B cell (primary cell): ENCODE measurements at regions of chr9 and their contacts with region 1.

Region 1: DNA sequence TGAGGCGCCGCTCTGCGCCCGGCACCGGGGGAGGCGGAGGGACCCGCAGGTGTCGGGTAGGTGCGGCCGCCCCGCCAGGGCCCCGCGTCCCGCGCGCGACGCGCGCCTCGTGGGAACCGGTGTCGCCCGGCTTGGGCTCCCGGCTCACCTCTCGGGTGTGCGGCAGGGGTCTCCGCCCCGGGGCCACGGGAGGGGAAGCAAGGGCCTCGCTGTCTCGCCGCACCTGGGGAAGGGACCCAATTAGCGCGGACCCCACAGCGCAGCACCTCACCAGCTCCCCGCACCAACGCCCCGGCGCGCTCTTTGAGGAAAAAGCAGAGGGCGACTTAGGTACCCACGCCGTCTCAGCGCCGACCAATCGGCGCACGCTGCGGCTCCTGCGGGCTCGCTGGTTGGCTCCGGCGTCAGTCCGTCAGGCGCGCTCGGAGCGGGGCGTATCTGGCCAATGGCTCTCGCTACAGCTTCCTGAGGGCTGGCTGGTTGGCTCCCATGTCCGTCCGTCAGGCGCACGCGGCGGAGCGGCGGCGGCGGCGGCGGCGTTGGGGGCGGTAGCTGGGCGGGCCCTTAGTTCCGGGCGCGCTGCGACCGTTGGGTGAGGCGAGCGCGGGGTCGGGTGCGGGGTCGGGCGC is at the start of gene TRAF2:
- DNase-seq: peak; percentile 99
- ATAC-seq: peak; percentile 91
- H3K4me3 ChIP-seq: peak within 1 kb of the TSS; percentile 30 to 91 (median 83)
- H3K4me3 Mint-ChIP-seq: peak within 1 kb of the TSS; percentile 91
- H3K27ac ChIP-seq: peak within 1 kb of the TSS; percentile 78 to 99
- H3K27ac Mint-ChIP-seq: peak within 1 kb of the TSS; percentile 87
- H3K4me1 ChIP-seq: peaks cover 28 to 36% of the 10 kb centered on the region in 2 donors
- H3K4me1 Mint-ChIP-seq: peaks cover 34% of the 10 kb centered on the region
- H3K27me3 ChIP-seq: no peaks in the 10 kb centered on the region
- H3K27me3 Mint-ChIP-seq: no peaks in the 10 kb centered on the region
- CTCF ChIP-seq: no peak
- total RNA-seq, gene TRAF2: 54.5 and 55.4 TPM in 2 replicates

Region 2: GRCh38 chr9:135797507-135798262 is 1088.4 kb before region 1 on chr9:
- CTCF ChIA-PET with region 1: no interaction called
- POLR2A ChIA-PET with region 1: no interaction called
- intact Hi-C with region 1: no loop called
- DNase-seq: no peak
- ATAC-seq: no peak
- H3K4me3 ChIP-seq: no peak overlapping the region
- H3K4me3 Mint-ChIP-seq: no peak overlapping the region
- H3K27ac ChIP-seq: no peak overlapping the region
- H3K27ac Mint-ChIP-seq: no peak overlapping the region
- H3K4me1 ChIP-seq: no peaks in the 10 kb centered on the region
- H3K4me1 Mint-ChIP-seq: no peaks in the 10 kb centered on the region
- H3K27me3 ChIP-seq: no peaks in the 10 kb centered on the region
- H3K27me3 Mint-ChIP-seq: peaks cover 3% of the 10 kb centered on the region
- CTCF ChIP-seq: peak; percentile 43

Region 3: GRCh38 chr9:135939351-135940265 is 946.5 kb before region 1 on chr9:
- CTCF ChIA-PET with region 1: no interaction called
- POLR2A ChIA-PET with region 1: no interaction called
- intact Hi-C with region 1: no loop called
- DNase-seq: no peak
- ATAC-seq: no peak
- H3K4me3 ChIP-seq: no peak overlapping the region
- H3K4me3 Mint-ChIP-seq: no peak overlapping the region
- H3K27ac ChIP-seq: no peak overlapping the region
- H3K27ac Mint-ChIP-seq: peak overlapping the region; percentile 32
- H3K4me1 ChIP-seq: no peaks in the 10 kb centered on the region
- H3K4me1 Mint-ChIP-seq: no peaks in the 10 kb centered on the region
- H3K27me3 ChIP-seq: no peaks in the 10 kb centered on the region
- H3K27me3 Mint-ChIP-seq: no peaks in the 10 kb centered on the region
- CTCF ChIP-seq: no peak

Region 4: GRCh38 chr9:136392538-136393449 is 493.3 kb before region 1 on chr9:
- CTCF ChIA-PET with region 1: no interaction called
- POLR2A ChIA-PET with region 1: no interaction called
- intact Hi-C with region 1: no loop called
- DNase-seq: no peak
- ATAC-seq: no peak
- H3K4me3 ChIP-seq: no peak overlapping the region
- H3K4me3 Mint-ChIP-seq: no peak overlapping the region
- H3K27ac ChIP-seq: no peak overlapping the region
- H3K27ac Mint-ChIP-seq: no peak overlapping the region
- H3K4me1 ChIP-seq: no peaks in the 10 kb centered on the region
- H3K4me1 Mint-ChIP-seq: no peaks in the 10 kb centered on the region
- H3K27me3 ChIP-seq: no peaks in the 10 kb centered on the region
- H3K27me3 Mint-ChIP-seq: no peaks in the 10 kb centered on the region
- CTCF ChIP-seq: no peak

Region 5: GRCh38 chr9:136865735-136866103 is 20.3 kb before region 1 on chr9:
- CTCF ChIA-PET with region 1: interaction called, 3 read pairs
- POLR2A ChIA-PET with region 1: interaction called, 4 read pairs
- intact Hi-C with region 1: loop called (anchors 1 kb)
- DNase-seq: no peak
- ATAC-seq: no peak
- H3K4me3 ChIP-seq: peak overlapping the region in 4 of 5 experiments; percentile 62 to 85 (median 74)
- H3K4me3 Mint-ChIP-seq: peak overlapping the region; percentile 90
- H3K27ac ChIP-seq: peak overlapping the region; percentile 48 to 92
- H3K27ac Mint-ChIP-seq: peak overlapping the region; percentile 61
- H3K4me1 ChIP-seq: peaks cover 8 to 19% of the 10 kb centered on the region in 2 donors
- H3K4me1 Mint-ChIP-seq: peaks cover 19% of the 10 kb centered on the region
- H3K27me3 ChIP-seq: no peaks in the 10 kb centered on the region
- H3K27me3 Mint-ChIP-seq: no peaks in the 10 kb centered on the region
- CTCF ChIP-seq: no peak

Region 6: GRCh38 chr9:136902259-136902821 is 16.3 kb after region 1 on chr9:
- CTCF ChIA-PET with region 1: interaction called, 3 read pairs
- POLR2A ChIA-PET with region 1: interaction called, 23 read pairs
- intact Hi-C with region 1: loop called (anchors 1 kb)
- DNase-seq: peak; percentile 85
- ATAC-seq: peak; percentile 83
- H3K4me3 ChIP-seq: peak overlapping the region in 3 of 5 experiments; percentile 23 to 47 (median 32)
- H3K4me3 Mint-ChIP-seq: peak overlapping the region; percentile 83
- H3K27ac ChIP-seq: peak overlapping the region; percentile 90 to 96
- H3K27ac Mint-ChIP-seq: peak overlapping the region; percentile 96
- H3K4me1 ChIP-seq: peaks cover 24 to 41% of the 10 kb centered on the region in 2 donors
- H3K4me1 Mint-ChIP-seq: peaks cover 47% of the 10 kb centered on the region
- H3K27me3 ChIP-seq: no peaks in the 10 kb centered on the region
- H3K27me3 Mint-ChIP-seq: no peaks in the 10 kb centered on the region
- CTCF ChIP-seq: no peak

Region 7: GRCh38 chr9:136944519-136945279 is 58.6 kb after region 1 on chr9 and contains the starts of genes C8G and FBXW5:
- CTCF ChIA-PET with region 1: interaction called, 3 read pairs
- POLR2A ChIA-PET with region 1: interaction called, 7 read pairs
- intact Hi-C with region 1: loop called (anchors 1 kb)
- DNase-seq: peak; percentile 96
- ATAC-seq: peak; percentile 91
- H3K4me3 ChIP-seq: peak within 1 kb of the TSS; percentile 47 to 72 (median 63)
- H3K4me3 Mint-ChIP-seq: peak within 1 kb of the TSS; percentile 80
- H3K27ac ChIP-seq: peak within 1 kb of the TSS in 1 of 2 donors; percentile 48
- H3K27ac Mint-ChIP-seq: peak within 1 kb of the TSS; percentile 87
- H3K4me1 ChIP-seq: peaks cover 11 to 22% of the 10 kb centered on the region in 2 donors
- H3K4me1 Mint-ChIP-seq: peaks cover 12% of the 10 kb centered on the region
- H3K27me3 ChIP-seq: no peaks in the 10 kb centered on the region
- H3K27me3 Mint-ChIP-seq: no peaks in the 10 kb centered on the region
- CTCF ChIP-seq: peak; percentile 90
- total RNA-seq, gene C8G: 1.7 and 2.8 TPM in 2 replicates
- total RNA-seq, gene FBXW5: 99.6 and 102 TPM in 2 replicates

Region 8: DNA sequence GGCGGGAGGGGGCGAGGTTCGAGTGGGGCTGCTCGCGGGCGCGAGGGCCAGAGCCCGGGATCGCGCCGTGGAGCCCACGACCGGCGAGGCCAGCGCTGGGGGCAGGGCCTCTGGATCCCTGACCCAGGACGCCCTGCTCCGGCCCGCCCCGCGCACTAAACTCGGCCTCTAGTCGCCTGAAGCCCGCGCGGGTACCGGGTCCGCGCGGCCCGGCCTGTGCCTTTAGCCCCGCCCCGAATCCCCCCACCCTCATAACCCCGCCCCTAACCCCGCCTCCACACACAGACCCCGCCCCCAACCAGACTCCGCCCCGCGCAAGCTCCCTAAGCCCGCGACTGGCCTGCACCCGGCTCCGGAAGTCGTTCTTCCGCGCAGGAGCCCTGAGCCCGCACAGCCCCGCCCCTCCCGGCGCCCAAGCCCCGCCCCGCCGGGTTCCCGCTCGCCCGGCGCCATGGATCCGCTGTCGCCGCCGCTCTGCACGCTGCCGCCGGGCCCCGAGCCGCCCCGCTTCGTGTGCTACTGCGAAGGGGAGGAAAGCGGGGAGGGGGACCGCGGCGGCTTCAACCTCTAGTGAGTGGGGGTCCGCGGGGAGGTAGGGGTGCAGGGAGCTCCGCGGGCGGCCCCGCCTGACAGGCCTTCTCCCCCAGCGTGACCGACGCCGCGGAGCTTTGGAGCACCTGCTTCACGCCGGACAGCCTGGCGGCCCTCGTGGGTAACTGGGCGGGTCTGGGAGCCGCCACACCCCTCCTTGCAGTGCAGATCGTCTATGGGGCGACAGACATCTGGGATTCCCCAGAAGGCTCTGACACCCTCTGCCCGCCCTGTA is 106.1 kb after region 1 on chr9 and contains the start of gene PAXX:
- CTCF ChIA-PET with region 1: no interaction called
- POLR2A ChIA-PET with region 1: no interaction called
- intact Hi-C with region 1: loop called (anchors 1 kb)
- DNase-seq: peak; percentile 92
- ATAC-seq: peak; percentile 91
- H3K4me3 ChIP-seq: peak within 1 kb of the TSS; percentile 32 to 71 (median 66)
- H3K4me3 Mint-ChIP-seq: peak within 1 kb of the TSS; percentile 91
- H3K27ac ChIP-seq: peak within 1 kb of the TSS; percentile 76 to 97
- H3K27ac Mint-ChIP-seq: peak within 1 kb of the TSS; percentile 91
- H3K4me1 ChIP-seq: peaks cover 27 to 38% of the 10 kb centered on the region in 2 donors
- H3K4me1 Mint-ChIP-seq: peaks cover 26% of the 10 kb centered on the region
- H3K27me3 ChIP-seq: peaks cover 0 to 3% (median 0%) of the 10 kb centered on the region in 4 experiments
- H3K27me3 Mint-ChIP-seq: peaks cover 6% of the 10 kb centered on the region
- CTCF ChIP-seq: no peak
- total RNA-seq, gene PAXX: 73.0 and 74.8 TPM in 2 replicates

Region 9: GRCh38 chr9:137200311-137201204 is 314.5 kb after region 1 on chr9 and contains the start of gene TPRN:
- CTCF ChIA-PET with region 1: no interaction called
- POLR2A ChIA-PET with region 1: no interaction called
- intact Hi-C with region 1: loop called (anchors 10 kb)
- DNase-seq: peak; percentile 99
- ATAC-seq: peak; percentile 95
- H3K4me3 ChIP-seq: peak within 1 kb of the TSS; percentile 12 to 80 (median 75)
- H3K4me3 Mint-ChIP-seq: peak within 1 kb of the TSS; percentile 88
- H3K27ac ChIP-seq: peak within 1 kb of the TSS; percentile 78 to 89
- H3K27ac Mint-ChIP-seq: peak within 1 kb of the TSS; percentile 90
- H3K4me1 ChIP-seq: peaks cover 31 to 41% of the 10 kb centered on the region in 2 donors
- H3K4me1 Mint-ChIP-seq: peaks cover 29% of the 10 kb centered on the region
- H3K27me3 ChIP-seq: peaks cover 0 to 6% (median 0%) of the 10 kb centered on the region in 4 experiments
- H3K27me3 Mint-ChIP-seq: no peaks in the 10 kb centered on the region
- CTCF ChIP-seq: no peak
- total RNA-seq, gene TPRN: 16.3 and 19.3 TPM in 2 replicates